Left colon (tissue), 2 donors: ENCODE measurements at regions of chr7 and their contacts with region 1.

Region 1: GRCh38 chr7:23181684-23182553 is at the start of gene NUP42:
- DNase-seq: peak; percentile 96 to 97
- ATAC-seq: peak; percentile 99
- total RNA-seq, gene NUP42: 21.1 to 30.8 TPM

Region 2: DNA sequence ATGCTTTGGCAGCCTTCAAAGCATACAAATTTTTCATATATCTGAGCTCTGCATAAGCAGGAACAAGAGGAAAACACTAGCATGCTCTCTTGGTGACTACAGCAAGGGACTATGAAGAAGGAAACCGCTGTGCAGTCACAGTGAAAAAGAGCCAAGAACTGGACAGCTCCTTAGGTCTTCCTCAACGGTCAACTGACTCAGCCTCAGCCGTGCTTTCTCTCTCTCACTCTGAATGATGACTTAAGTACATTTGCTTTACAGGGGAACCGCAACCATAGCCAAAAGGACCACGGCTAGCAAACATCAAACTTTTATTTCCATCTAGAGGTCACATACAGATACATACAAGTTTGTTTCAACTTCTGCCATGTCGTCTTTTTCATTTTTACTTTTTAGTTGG is 237.9 kb before region 1 on chr7:
- intact Hi-C with region 1: no loop called
- DNase-seq: no peak
- ATAC-seq: no peak

Region 3: DNA sequence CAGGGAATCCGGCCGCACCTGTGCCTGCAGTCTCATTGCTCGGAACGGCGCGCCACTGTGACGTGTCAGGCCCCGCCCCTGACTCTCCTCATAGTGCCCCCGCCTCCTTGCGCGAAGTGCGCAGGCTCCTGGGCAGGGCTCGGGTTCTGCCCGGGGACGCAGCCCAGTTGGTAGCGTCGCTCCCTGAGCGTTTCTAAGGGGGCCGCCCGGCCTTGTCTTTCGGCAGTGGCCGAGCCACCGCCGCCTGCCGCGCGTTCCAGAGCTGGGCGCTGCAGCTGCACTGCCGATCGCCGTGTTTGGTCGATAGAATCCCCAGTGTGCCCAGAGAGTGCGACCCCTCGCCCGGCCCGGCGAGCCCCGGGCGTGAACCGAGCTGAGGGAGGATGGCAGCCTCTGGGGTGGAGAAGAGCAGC is 76.3 kb before region 1 on chr7 and contains the start of gene KLHL7:
- intact Hi-C with region 1: loop called in 1 of 2 experiments (anchors 5 kb)
- DNase-seq: peak; percentile 96 to 99
- ATAC-seq: peak; percentile 100
- total RNA-seq, gene KLHL7: 14.4 to 17.8 TPM

Region 4: GRCh38 chr7:23287612-23288011 is 105.7 kb after region 1 on chr7:
- intact Hi-C with region 1: no loop called
- DNase-seq: no peak
- ATAC-seq: no peak

Region 5: GRCh38 chr7:23431702-23432199 is 249.8 kb after region 1 on chr7:
- intact Hi-C with region 1: no loop called
- DNase-seq: no peak
- ATAC-seq: no peak